ENCODE measurements at regions of chr19 and their contacts with region 1.

Region 1: DNA sequence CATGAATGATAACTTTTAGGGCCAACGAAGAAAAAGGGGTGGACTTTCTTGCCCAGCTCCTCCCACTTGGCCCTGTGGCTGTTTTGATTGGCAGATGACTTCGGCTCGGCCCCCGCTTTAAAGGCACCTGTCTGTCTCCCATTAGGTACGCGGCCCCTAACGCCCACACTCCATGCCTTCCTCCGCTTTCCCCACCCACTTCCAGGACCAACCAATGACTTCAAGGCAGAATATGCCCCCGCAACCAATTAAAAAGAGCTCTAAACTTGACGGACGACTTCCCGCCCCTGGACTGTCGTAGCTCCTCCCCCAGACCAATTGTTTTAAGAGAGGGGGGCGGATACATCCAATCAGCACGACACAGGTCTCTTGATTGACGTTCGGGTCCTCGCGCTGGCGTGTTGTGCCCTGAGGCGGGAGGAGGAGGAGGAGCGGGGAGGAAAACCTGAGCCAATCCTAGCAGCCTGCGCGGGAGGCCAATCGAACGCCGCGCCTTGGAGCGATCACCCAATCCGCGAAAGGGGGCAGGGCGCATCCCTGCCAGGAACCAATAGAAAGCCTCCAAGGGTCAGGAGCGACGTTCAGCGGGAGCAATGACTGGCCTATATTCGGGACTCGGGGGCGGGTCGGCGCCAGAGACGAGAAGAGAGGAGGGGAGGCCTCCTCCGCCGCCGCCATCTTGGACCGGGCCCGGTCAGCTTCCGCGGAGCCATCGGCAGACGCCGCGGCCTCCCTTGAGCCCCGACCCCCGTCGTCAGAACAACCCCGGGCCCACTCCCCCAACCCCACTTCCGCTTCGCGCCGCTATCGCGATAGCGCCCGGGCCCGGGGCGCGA is at the start of gene CNOT3:
- DNase-seq: peak; percentile 100
- H3K4me3 Mint-ChIP-seq: peak within 1 kb of the TSS; percentile 86
- H3K27ac Mint-ChIP-seq: peak within 1 kb of the TSS; percentile 87
- H3K4me1 Mint-ChIP-seq: peaks cover 52% of the 10 kb centered on the region
- H3K27me3 Mint-ChIP-seq: no peaks in the 10 kb centered on the region
- total RNA-seq, gene CNOT3: 54.6 to 58.7 TPM

Region 2: GRCh38 chr19:54102421-54103169 is 34.7 kb before region 1 on chr19 and contains the start of gene NDUFA3:
- CTCF ChIA-PET with region 1: no interaction called
- POLR2A ChIA-PET with region 1: no interaction called
- intact Hi-C with region 1: loop called (anchors 1 kb)
- DNase-seq: peak; percentile 99
- H3K4me3 Mint-ChIP-seq: peak within 1 kb of the TSS; percentile 99
- H3K27ac Mint-ChIP-seq: peak within 1 kb of the TSS; percentile 89
- H3K4me1 Mint-ChIP-seq: peaks cover 13% of the 10 kb centered on the region
- H3K27me3 Mint-ChIP-seq: no peaks in the 10 kb centered on the region
- total RNA-seq, gene NDUFA3: 106 to 113 TPM

Region 3: GRCh38 chr19:54147676-54148075 is 10.4 kb after region 1 on chr19:
- CTCF ChIA-PET with region 1: no interaction called
- POLR2A ChIA-PET with region 1: no interaction called
- intact Hi-C with region 1: no loop called
- DNase-seq: no peak
- H3K4me3 Mint-ChIP-seq: no peak overlapping the region
- H3K27ac Mint-ChIP-seq: no peak overlapping the region
- H3K4me1 Mint-ChIP-seq: no peaks in the 10 kb centered on the region
- H3K27me3 Mint-ChIP-seq: no peaks in the 10 kb centered on the region

Region 4: GRCh38 chr19:54203151-54203611 is 65.9 kb after region 1 on chr19:
- CTCF ChIA-PET with region 1: no interaction called
- POLR2A ChIA-PET with region 1: interaction called, 11 read pairs
- intact Hi-C with region 1: loop called (anchors 1 kb)
- DNase-seq: no peak
- H3K4me3 Mint-ChIP-seq: peak overlapping the region; percentile 96
- H3K27ac Mint-ChIP-seq: peak overlapping the region; percentile 100
- H3K4me1 Mint-ChIP-seq: peaks cover 71% of the 10 kb centered on the region
- H3K27me3 Mint-ChIP-seq: no peaks in the 10 kb centered on the region

Measured in activated CD4-positive, alpha-beta memory T cell treated with anti-CD3 and anti-CD28 coated beads for 36 hours (primary cell).